Ascending aorta (tissue), 2 donors: ENCODE measurements at regions of chr22 and their contacts with region 1.

Region 1: DNA sequence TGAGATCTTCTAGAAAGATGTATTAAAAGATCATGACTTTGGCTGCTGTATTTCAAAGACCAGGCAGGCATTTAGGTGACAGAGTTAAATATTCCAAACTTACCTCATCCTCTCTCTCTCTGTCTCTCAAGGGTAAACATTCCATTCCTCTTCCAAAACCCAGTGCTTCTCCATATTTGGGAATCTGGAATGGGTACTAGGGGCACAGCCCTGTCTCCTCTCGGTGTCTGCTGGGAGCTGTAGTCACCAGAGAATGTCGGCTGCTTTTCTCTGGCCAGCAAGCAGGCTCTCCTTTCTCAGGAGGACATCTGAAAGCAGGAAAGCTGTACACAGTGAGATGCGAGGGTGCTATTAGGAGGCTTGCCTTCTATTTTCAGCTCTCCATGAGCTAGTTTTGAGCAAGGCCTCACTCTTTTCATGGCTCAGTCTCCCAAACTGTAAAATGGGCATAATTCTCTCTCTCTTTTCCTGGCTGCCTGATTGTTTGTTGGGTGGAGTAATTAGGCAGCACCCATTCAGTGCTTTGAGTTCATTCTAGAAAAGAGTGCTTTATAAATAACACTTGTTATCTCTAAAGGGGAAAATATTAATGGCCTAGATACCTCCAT is 9.3 kb upstream of the PEX26 start:
- DNase-seq: peak in 1 of 2 donors; percentile 87
- H3K4me3 ChIP-seq: peak overlapping the region in 1 of 2 donors; percentile 32
- H3K27ac ChIP-seq: peak overlapping the region; percentile 85 to 97
- H3K4me1 ChIP-seq: peaks cover 9 to 19% of the 10 kb centered on the region in 2 donors
- H3K27me3 ChIP-seq: no peaks in the 10 kb centered on the region
- CTCF ChIP-seq: no peak

Region 2: GRCh38 chr22:18001040-18001893 is 67.2 kb before region 1 on chr22:
- intact Hi-C with region 1: loop called (anchors 2 kb)
- DNase-seq: peak; percentile 65 to 94
- H3K4me3 ChIP-seq: peak overlapping the region; percentile 70 to 98
- H3K27ac ChIP-seq: peak overlapping the region; percentile 88 to 92
- H3K4me1 ChIP-seq: peaks cover 0 to 11% of the 10 kb centered on the region in 2 donors
- H3K27me3 ChIP-seq: no peaks in the 10 kb centered on the region
- CTCF ChIP-seq: peak; percentile 37 to 58 (median 50)

Region 3: GRCh38 chr22:18024276-18024947 is 44.1 kb before region 1 on chr22 and contains the start of gene MICAL3:
- intact Hi-C with region 1: loop called (anchors 2 kb)
- DNase-seq: peak in 1 of 2 donors; percentile 75
- H3K4me3 ChIP-seq: peak within 1 kb of the TSS; percentile 71 to 88
- H3K27ac ChIP-seq: peak within 1 kb of the TSS; percentile 69
- H3K4me1 ChIP-seq: peaks cover 0 to 3% of the 10 kb centered on the region in 2 donors
- H3K27me3 ChIP-seq: no peaks in the 10 kb centered on the region
- CTCF ChIP-seq: peak; percentile 26 to 62 (median 51)
- total RNA-seq, gene MICAL3: 36.9 TPM